IMR-90 (cell line): ENCODE measurements at regions of chr11 and their contacts with region 1.

Region 1: DNA sequence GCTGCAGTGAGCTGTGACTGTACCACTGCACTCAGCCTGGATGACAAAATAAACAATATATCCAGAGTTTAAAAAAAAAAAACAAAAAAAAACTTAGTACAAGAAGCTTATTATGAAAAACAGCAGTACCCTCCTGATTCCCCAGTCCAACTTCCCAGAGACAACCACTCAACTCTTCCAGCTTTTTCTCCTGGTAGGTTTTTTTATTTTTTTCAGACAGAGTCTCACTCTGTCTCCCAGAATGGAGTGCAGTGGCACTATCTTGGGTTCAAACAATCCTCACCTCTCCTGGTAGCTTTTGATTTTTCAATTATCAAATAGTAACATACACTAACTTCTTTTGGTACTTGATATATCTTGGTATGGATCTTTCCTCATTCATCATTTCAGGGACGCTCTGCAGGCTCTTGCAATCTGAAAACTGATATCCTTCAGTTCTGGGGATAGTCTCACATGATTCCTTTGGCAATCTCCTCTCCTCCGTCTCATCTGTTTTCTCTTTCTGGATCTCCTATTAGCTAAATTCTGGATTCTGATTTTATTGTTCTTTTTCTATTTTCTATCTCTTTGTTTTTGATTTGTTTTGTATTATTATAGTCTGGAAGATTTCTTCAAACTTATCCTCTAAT is 44.9 kb downstream of the ALG9 start:
- DNase-seq: no peak
- ATAC-seq: no peak
- H3K4me3 ChIP-seq: no peak overlapping the region
- H3K27ac ChIP-seq: no peak overlapping the region
- H3K4me1 ChIP-seq: no peaks in the 10 kb centered on the region; the same call in 1 of the 2 replicates
- H3K27me3 ChIP-seq: no peaks in the 10 kb centered on the region
- CTCF ChIP-seq: no peak
- POLR2A ChIP-seq: no peak
- RAD21 ChIP-seq: no peak

Region 2: DNA sequence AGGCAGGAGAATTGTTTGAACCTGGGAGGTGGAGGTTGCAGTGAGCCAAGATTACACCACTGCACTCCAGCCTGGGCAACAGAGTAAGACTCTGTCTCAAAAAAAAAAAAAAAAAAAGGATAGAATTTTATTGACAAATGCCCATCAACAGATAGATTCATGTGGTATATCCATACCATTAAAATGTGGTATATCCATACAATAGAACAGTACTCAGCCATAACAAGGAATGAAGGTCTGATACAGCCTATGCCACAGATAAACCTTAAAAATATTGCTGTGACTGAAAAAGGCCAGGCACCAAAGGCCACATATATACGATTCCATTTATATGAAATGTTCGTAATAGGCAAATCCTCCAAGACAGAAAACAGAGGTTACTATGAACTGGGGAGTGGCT is 15.0 kb before region 1 on chr11:
- CTCF ChIA-PET with region 1: no interaction called
- POLR2A ChIA-PET with region 1: interaction called, 10 read pairs
- dilution Hi-C with region 1: no loop called
- in situ Hi-C with region 1: no loop called
- intact Hi-C with region 1: no loop called
- DNase-seq: no peak
- ATAC-seq: no peak
- H3K4me3 ChIP-seq: no peak overlapping the region
- H3K27ac ChIP-seq: no peak overlapping the region
- H3K4me1 ChIP-seq: peaks cover 6% of the 10 kb centered on the region
- H3K27me3 ChIP-seq: no peaks in the 10 kb centered on the region
- CTCF ChIP-seq: no peak
- POLR2A ChIP-seq: no peak
- RAD21 ChIP-seq: no peak

Region 3: DNA sequence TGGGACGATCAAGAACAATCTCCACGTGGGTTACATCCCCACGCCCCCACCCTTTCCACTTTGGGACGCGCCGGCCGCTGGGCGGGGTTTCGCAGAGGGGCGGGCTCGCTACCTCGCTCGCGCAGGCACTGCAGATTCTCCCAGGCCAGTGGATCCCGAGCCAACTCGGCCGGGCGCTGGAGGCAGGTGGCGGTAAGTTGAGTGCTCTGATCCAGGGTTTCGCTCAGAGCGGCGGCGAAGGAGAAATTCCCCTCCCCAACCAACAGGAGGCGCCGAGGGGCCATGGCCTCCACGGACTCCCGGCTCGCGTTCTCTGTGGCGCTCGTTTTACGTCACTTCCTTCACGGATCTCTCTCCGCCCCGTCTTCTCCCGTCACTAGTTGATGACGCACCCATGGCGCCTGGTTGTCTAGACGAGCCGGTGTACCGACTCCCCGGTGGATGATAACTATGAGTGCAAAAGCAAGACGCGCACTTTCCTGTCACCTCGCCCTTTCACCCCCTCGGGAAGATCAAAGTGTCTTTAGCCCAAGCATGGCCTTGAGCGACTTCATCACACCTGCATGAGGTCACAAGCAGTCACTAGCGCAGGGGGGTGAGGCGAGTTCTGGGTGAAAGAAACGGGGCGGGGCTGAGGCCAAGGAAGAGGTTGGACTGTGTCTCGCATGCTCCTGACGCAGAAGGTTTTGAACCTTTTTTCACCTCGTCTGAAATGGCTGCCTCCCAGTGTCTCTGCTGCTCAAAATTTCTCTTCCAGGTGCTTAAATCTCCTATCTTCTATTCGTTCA is 52.6 kb after region 1 on chr11 and contains the starts of genes CFAP68 and FDXACB1:
- CTCF ChIA-PET with region 1: no interaction called
- POLR2A ChIA-PET with region 1: no interaction called
- dilution Hi-C with region 1: no loop called
- in situ Hi-C with region 1: no loop called
- intact Hi-C with region 1: no loop called
- DNase-seq: peak; percentile 97
- ATAC-seq: peak; percentile 95
- H3K4me3 ChIP-seq: peak within 1 kb of the TSS; percentile 71
- H3K27ac ChIP-seq: peak within 1 kb of the TSS; percentile 88
- H3K4me1 ChIP-seq: peaks cover 3% of the 10 kb centered on the region; the same call in 1 of the 2 replicates
- H3K27me3 ChIP-seq: no peaks in the 10 kb centered on the region
- CTCF ChIP-seq: peak; percentile 99
- POLR2A ChIP-seq: peak; percentile 34; the same call in 1 of the 2 replicates
- RAD21 ChIP-seq: peak; percentile 97
- total RNA-seq, gene CFAP68: 8.9 and 10.2 TPM in 2 replicates
- total RNA-seq, gene FDXACB1: 3.0 and 3.3 TPM in 2 replicates

Region 4: DNA sequence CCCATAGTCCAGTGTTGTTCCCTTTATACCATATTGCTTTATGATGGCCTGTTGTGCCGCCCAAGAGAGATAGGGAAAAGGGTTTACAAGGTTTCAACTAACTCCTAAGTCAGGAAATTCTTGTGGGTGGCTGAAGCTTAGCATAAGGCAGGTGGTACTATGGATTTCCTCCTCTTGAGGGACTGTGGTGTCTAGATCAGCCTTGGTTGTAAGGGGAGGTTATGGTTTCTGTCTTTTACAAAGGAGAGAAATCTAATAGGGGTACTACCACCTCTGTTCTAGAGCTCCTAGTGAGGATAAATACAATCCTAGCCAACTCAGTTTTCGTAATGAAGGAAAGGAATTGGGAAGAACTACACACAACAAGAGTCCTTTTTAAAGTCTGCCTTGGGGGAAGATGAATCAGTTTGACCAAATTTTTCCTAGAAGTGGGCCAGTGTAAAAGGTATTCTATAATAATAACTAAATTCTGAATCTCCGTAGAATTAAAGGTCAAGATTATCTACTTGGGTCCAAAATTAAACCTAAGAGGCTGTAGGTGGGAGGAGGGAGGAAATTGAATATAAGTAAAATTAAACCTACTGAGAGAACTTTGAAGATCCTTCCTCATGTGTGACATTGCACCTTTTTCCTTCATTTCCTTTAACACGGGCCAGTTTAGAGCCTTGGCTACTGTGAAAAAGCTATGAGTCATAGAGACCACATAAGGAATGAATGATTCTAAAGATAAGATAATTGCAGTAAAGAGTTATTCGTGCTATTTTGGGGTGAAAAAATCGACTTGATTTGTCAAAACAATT is 215.9 kb after region 1 on chr11:
- CTCF ChIA-PET with region 1: no interaction called
- POLR2A ChIA-PET with region 1: no interaction called
- dilution Hi-C with region 1: no loop called
- in situ Hi-C with region 1: no loop called
- intact Hi-C with region 1: no loop called
- DNase-seq: peak; percentile 26
- ATAC-seq: no peak
- H3K4me3 ChIP-seq: no peak overlapping the region
- H3K27ac ChIP-seq: no peak overlapping the region
- H3K4me1 ChIP-seq: no peaks in the 10 kb centered on the region
- H3K27me3 ChIP-seq: no peaks in the 10 kb centered on the region
- CTCF ChIP-seq: no peak
- POLR2A ChIP-seq: no peak
- RAD21 ChIP-seq: no peak